ENCODE measurements at regions of chr2 and their contacts with region 1.

Region 1: DNA sequence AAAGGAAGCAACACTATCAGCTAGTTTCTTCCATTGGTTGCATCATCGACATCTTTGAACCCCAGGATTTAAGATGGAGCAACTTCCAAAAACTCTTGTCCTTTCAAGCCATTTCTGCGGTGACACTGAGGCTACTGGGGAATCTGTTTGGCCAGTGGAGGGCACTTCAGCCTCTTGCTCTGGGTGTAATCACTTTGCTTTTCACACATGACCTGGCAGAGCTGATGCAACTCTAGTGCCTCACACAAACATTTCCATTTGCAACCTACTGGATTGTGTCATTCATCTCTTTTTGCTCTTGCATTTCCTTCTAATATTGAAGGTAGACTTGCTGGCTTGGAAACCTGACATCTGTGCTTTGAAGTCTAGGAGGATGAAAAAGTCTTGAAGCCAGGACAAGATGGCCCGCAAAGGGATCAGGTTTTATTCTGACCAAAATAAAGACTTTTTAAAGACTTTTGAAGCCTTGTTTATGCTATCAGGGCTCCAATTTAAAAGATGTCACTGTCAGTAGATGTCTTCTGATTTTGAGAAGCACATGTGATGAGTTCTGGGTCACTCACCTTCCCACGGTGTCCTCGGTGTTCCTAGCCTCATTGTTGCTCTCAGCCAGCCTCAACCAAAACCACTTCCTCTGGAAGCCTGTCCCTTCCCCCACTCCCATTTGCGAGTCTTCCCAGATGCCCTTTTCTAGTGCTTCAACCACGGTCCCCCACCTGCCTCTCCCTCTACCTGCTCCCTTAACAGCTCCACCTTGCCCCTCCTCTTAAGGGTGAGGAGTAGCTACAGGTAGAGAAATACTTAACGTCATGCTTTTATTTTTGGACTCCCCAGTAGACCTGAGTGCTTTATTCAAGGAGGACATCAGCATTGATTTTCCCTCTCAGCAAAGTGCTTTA is 69.7 kb upstream of the KCNE4 start:
- DNase-seq: peak; percentile 46
- ATAC-seq: peak; percentile 83 to 96

Region 2: DNA sequence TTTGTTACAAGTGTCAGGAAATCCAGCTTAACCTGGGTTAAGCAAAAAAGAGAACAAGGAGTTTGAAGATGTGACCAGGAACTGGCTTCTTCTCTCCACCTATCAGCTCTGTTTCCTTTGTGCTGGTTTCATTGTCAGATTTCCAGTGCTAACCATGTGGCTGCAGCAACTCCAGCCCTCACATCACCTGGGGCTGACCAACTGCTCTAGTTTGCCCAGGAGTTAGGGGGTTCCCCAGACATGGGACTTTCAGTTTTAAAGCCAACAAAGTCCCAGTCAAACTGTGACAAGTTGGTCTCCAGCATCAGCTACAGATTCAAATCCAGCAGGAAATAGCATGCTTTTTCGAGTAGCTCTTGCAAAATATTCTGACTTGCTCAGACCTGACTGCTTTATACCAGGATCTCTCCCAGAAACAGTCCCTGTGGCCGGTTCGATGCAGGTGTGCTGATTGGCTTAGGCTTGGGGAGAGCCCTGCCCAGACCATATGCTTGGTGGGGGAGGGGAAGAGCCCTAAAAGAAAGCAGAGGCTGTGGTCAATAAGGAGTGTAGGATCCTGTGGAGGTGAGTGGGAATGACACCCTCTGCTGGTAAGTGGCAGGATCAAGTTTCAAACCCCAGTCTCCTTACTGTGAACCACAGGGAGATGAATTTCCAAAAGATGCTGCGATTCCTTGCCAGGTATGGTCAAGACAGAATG is 119.2 kb after region 1 on chr2:
- intact Hi-C with region 1: loop called in 1 of 2 experiments (anchors 5 kb)
- DNase-seq: no peak
- ATAC-seq: peak; percentile 51 to 53

Region 3: GRCh38 chr2:224802407-224802806 is 1820.1 kb after region 1 on chr2:
- intact Hi-C with region 1: no loop called
- DNase-seq: no peak
- ATAC-seq: peak in 1 of 2 donors; percentile 25